ENCODE measurements at regions of chr2 and their contacts with region 1.

Region 1: DNA sequence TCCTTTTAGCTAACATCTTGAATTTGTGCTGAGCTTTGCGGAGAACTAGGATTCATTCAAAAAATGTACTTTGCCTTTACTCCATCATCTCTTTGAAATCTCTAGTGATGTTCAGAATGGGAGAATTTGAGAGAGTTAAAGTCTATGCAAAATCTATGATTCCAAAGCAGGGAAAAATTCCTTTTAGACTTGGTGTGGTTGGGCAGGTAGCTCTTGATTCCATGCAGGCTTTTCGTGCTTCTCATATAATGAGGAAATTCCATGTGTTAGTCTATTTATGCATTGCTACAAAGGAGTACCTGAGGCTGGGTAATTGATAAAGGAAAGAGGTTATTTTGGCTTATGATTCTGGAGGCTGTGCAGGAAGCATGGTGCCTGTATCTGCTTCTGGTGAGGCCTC is 258.9 kb upstream of the EPHA4 start:
- DNase-seq: no peak

Region 2: DNA sequence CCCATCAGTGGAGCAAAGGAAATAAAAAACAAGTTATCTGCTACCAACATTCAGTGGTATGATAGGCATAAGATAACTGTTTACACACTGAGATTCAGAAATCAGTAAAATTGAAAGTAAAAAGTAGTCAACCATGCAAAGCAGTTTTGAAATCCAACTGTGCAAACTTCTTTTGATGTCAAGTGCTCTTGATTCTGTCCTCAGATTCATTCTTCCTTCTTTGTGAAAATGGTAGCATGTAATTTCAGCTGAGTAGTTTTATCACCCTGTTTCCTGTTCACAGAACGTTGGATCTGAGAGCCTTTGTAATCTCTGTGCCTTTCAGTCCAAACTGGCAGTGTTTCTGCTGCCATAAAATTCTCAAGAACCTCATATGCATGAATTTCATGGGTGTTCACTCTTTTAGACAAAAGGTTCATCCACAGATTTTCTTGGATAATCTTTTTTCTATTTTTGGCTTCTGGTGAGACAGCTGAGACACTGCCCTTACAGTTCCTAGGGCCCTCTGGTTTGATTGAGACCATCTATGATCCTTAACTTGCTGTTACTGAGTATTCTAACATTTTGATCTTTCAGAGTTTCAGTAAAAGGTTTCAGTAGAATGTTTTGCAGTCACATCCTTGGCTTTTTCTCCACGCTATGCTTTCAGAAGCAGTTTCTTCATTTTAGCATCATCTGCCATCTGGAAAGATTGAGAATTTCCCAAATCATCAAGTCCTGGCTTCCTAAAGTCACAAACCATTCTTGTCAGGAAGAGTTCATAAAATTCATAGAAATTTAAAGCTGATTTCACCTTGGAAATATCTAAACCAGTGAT is 13.4 kb after region 1 on chr2:
- intact Hi-C with region 1: no loop called
- DNase-seq: no peak

Region 3: DNA sequence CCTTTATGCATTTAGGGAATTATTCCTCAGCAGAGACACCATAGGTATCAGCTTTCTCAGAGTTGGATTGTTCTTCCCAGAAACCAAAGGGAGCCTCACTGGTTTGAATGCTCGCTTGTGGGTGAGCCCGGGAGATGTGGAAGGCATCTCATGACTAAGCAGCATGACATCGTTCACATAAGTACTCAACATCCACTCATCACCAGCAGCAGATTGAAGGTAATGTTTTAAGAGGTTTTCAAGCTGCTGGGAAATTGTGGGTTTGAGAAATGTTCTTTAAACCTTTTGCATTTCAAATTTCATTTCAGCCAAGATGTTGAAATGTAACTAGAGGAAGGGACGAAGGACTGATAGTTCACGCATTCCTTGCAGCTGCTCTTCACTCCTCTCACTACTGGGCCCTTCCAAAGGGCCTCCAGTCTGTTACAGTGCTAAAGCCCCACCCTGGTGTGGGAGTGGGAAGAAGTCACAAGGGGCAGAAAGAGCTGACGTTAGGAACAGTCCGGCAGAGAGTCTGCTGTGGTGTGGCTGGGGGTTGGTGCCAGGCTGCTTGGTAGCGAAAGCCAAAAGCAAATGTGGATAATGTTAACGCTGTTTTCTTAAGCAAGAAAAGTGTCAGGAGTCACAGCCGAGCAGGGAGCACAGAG is 65.6 kb after region 1 on chr2:
- intact Hi-C with region 1: loop called in 1 of 2 experiments (anchors 2 kb)
- DNase-seq: peak; percentile 87

Measured in posterior vena cava (tissue), 2 donors.